Left cardiac atrium (tissue), 4 donors: ENCODE measurements at regions of chr6 and their contacts with region 1.

Region 1: DNA sequence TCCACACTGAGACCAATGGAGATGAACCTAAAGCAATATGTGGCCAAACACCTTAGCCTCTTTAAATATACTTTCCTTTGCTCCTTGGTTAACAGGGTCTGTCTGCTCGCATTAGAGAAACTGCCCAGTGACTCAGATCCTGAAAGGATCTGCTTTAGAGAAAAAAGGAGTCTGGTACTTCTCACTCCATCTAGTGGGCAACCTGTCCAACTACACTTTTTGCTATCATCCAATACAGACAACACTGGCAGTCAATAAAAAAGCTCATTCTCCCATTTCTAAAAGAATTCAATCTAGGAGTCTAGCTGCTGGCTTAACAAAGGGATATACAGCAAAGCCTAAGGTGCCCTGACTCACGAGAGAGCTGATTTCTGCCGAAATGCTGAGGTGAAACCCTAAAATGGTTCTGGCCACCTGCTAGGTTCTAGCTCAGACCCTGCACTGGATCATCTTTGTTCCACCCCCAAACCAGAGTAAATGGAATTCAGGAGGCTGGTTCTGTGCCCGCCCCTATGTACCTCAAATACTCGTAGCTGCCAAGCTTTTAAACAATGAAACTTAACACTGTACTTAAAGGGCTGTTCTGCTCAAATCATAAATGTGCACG is 11.5 kb downstream of the GNL1 start:
- DNase-seq: no peak
- ATAC-seq: peak; percentile 61 to 66

Region 2: DNA sequence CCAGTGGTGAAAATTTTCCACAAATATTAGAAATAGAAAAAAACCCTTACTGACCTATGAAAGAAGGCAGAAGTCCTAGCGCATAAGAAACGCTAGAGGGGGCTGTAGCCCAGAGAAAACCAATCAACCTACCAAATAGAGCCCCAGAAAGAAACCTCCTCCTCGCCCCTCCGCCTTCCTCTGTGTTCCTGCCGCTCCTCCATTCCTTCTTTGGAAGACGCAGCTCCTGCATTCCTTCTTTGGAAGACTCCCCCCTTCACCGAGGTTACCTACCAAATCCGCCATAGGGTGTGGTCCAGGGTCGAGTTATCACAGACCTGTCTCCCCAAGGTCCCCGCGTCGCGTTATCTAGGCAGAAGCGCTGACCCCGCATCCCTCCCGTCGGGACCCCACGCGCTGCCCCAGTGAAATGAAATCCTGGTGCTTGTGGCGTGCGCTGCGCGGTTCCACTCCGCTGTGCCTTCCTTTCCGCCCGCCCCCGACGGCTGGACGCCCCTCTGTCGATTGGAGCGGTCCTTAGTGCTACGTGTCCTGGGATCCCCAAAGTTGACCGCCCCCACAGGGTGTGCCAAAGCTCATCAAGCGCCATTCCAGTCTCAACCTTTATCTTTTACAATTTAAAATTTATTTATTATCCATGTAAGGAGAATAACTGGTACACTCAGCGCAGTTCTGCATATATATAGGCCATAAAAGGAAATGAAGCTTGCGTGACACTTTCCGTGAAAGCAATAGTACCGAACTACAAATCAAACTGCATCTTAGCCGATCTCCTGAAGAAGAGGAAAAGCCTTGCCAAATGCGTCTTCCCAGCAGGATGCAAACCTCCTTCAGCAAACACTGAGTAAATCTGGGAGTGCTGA is 186.9 kb before region 1 on chr6:
- intact Hi-C with region 1: no loop called
- DNase-seq: peak; percentile 46
- ATAC-seq: peak; percentile 61 to 86

Region 3: GRCh38 chr6:30483677-30484279 is 61.0 kb before region 1 on chr6:
- intact Hi-C with region 1: loop called in 1 of 2 experiments (anchors 2 kb)
- DNase-seq: no peak
- ATAC-seq: peak in 1 of 2 donors; percentile 38

Region 4: GRCh38 chr6:30590994-30591393 is 46.2 kb after region 1 on chr6:
- intact Hi-C with region 1: loop called in 1 of 2 experiments (anchors 5 kb)
- DNase-seq: no peak
- ATAC-seq: peak in 1 of 2 donors; percentile 16

Region 5: DNA sequence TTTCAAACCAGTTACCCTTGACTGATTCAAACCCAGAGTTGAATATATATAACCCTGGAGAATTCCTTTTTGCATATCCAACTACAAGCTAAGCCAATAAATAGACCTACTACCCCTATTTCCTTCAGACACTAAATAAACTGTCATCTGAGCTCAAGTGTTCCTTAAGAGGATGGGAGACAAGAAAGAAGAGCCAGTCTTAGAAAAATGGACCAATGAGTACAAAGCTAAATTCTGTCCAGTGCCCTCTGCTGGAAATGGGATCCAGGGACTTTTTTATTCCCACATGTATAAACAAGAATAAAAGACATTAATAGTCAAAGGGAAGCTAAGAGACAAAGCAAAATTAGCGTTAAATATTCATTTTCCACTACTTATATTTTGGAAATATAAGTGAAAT is 67.4 kb after region 1 on chr6:
- intact Hi-C with region 1: no loop called
- DNase-seq: no peak
- ATAC-seq: no peak